AG04450 (cell line): ENCODE measurements at regions of chr11 and their contacts with region 1.

Region 1: GRCh38 chr11:65711785-65712632 is at the start of gene KAT5:
- DNase-seq: peak; percentile 96
- H3K4me3 ChIP-seq: peak within 1 kb of the TSS; percentile 84
- H3K27ac ChIP-seq: peak within 1 kb of the TSS; percentile 99
- H3K27me3 ChIP-seq: peaks cover 5% of the 10 kb centered on the region
- CTCF ChIP-seq: peak; percentile 98
- polyA plus RNA-seq, gene KAT5: 22.6 and 26.1 TPM in 2 replicates

Region 2: DNA sequence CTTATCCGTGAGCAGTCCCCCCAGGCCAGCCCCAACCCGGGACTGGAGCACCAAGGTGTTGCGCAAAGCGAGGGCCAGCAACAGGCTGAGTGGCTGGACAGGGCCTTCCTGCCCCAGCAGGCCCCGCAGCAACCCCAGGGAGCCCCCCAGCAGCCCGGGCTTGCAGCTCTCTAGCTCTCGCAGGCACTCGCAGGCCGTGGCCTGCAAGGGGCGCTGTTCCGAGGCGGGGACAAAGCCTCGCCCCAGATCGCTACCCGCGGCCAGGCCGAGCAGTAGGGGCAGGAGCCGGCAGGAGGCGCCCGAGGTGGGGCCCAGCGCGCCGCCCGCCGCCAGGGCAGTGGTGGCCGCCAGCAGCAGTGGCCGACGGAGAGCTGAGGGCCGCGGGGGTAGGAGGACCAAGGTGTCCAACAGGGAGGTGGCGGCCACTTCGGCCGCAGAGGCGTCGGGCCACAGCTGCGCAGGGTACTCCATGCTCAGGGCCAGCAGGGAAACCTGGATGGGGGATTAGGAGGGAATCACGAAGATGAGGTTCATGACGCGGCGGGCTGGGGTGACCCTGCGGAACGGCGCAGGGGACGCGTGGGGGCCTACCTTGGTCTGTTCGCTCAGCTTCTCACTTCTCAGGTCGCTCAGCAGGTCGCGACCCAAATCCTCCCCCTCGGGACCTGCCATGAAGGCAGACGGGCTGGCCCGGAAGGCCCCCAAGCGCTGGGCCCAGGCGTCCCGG is 68.0 kb after region 1 on chr11:
- CTCF ChIA-PET with region 1: interaction called, 17 read pairs
- POLR2A ChIA-PET with region 1: interaction called, 6 read pairs
- DNase-seq: peak; percentile 11
- H3K4me3 ChIP-seq: peak overlapping the region; percentile 79
- H3K27ac ChIP-seq: no peak overlapping the region
- H3K27me3 ChIP-seq: peaks cover 14% of the 10 kb centered on the region
- CTCF ChIP-seq: peak; percentile 66

Region 3: DNA sequence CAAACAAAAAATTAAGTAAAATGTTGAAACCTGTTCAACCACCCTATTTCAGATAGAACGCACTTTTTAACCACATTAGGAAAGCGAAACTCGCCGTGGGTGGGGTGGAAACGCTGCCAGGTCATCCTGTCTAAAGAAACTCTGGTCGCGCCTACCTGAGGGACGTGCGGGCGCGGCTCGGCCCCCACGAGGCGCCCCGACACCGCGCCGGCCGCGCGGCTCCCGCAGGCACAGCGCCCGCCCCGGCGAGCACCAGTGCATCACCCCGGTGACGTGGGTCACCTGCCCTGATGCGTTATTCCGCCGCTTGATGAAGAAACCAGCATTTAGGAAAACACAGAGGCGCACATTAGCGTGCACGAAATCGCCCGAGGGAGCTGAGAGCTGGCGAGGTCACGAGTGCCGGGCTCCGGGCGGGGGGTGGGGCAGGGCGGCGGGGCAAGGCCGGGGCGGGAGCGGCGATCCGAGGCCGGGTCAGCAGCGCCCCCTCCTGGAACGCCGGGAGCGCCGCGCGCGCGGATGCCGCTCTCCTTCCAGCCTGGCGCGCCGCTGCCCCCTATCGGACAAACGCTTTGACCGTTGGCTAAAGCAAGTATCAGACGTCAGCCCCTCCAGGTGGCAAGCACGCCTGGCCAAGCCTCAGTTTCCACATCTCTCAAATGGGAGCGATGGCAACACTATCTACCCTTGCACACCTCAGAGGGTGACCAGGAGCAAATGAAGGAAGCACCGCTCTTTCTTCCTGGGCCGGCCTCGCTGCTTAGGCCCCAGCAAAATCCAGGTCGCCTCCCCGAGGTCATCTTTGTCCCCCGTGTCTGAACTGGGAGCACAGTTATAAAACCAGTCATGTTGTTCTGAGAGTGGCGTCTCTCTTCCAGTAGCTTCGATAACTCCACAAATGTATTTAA is 106.1 kb after region 1 on chr11:
- CTCF ChIA-PET with region 1: interaction called, 59 read pairs
- POLR2A ChIA-PET with region 1: interaction called, 4 read pairs
- DNase-seq: peak; percentile 55
- H3K4me3 ChIP-seq: peak overlapping the region; percentile 77
- H3K27ac ChIP-seq: no peak overlapping the region
- H3K27me3 ChIP-seq: peaks cover 13% of the 10 kb centered on the region
- CTCF ChIP-seq: peak; percentile 93

Region 4: GRCh38 chr11:65833297-65834030 is 121.5 kb after region 1 on chr11 and contains the start of gene SNX32:
- CTCF ChIA-PET with region 1: interaction called, 17 read pairs
- POLR2A ChIA-PET with region 1: no interaction called
- DNase-seq: peak; percentile 78
- H3K4me3 ChIP-seq: peak within 1 kb of the TSS; percentile 85
- H3K27ac ChIP-seq: no peak within 1 kb of the TSS
- H3K27me3 ChIP-seq: peaks cover 29% of the 10 kb centered on the region
- CTCF ChIP-seq: no peak
- polyA plus RNA-seq, gene SNX32: 0.30 and 0.57 TPM in 2 replicates